ENCODE measurements at regions of chr13 and their contacts with region 1.

Region 1: GRCh38 chr13:37602747-37603381 is 4.3 kb upstream of the POSTN start:
- DNase-seq: no peak
- ATAC-seq: no peak

Region 2: GRCh38 chr13:37074703-37075102 is 528.2 kb before region 1 on chr13:
- intact Hi-C with region 1: loop called (anchors 2 kb)
- DNase-seq: no peak
- ATAC-seq: no peak

Region 3: DNA sequence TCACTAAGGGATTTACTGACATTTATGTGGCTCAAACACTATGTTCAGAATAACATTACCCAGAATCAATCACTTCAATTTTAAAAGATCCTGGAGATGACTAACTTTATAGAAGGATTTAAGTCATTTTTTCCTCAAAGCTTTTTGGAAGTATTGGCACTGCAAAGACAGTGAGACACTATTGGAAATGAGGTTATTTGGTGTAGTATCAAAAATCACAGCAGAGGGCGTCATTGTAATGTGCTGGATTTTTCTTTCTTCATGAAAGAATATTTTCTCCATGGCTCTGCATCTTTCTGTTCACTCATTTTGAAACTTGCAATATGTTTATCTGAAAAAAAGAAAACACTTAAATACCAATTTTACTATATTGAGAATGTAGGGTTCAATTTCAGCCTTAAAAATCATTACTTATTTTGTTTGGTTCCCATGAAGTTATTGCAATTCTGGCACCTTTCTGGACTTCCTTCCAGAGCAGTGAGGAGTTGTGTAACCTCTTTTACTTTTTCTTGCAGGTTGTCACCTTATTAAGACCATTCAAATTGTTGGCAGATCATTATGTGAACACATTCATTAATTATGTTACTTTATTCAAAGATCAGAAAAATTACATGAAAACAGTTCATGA is 493.7 kb before region 1 on chr13:
- intact Hi-C with region 1: loop called (anchors 1 kb)
- DNase-seq: no peak
- ATAC-seq: no peak

Region 4: GRCh38 chr13:37446503-37446902 is 156.4 kb before region 1 on chr13:
- intact Hi-C with region 1: no loop called
- DNase-seq: no peak
- ATAC-seq: peak; percentile 48